ENCODE measurements at regions of chr13 and their contacts with region 1.

Region 1: DNA sequence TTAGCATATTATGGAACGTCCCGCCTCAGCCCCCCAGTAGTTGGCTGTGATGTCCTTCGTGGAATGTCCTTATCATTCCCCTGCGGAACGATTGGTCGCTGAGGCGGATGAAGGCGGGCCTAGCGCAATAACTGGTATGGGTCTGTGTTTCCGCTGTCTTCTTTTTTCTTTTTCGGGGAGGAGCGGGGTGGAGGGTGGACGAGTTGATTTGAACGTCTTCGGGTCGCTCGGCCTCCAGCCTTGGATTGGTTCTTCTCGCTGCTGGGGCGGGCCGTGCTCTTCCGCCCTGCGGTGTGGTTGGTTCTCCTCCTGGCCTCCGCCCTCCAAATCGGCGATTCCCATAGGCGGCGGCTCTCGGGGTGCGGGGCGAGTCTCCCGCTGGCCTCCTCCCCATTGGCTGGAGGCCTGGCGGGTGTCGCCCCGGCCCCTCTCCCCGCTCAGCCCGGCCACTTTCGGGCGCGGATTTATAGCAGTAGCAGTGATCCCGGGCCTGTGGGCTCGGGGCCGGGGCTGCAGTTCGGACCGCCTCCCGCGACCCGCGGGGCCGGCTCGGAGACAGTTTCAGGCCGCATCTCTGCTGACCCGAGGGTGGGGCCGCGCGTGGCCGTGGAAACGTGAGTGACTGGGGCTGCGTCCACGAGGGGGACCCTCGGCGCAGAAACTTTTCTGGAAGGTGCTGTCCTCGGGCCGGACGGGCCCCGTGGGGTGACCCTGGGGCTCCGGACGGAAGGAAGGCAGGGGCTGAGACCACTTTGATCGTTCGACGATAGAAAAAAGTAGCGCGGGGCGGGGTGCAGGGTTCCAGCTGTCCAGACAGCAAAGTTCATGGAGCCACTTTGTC is 2.1 kb downstream of the ING1 start:
- DNase-seq: peak; percentile 87 to 99 (median 99)
- ATAC-seq: peak; percentile 71
- H3K4me3 ChIP-seq: peak overlapping the region; percentile 68
- H3K4me3 Mint-ChIP-seq: peak overlapping the region; percentile 93 to 100 (median 98)
- H3K27ac ChIP-seq: peak overlapping the region; percentile 92
- H3K27ac Mint-ChIP-seq: peak overlapping the region; percentile 96 to 100 (median 98)
- H3K4me1 ChIP-seq: peaks cover 0 to 20% of the 10 kb centered on the region in 2 donors
- H3K4me1 Mint-ChIP-seq: peaks cover 21 to 56% (median 37%) of the 10 kb centered on the region in 7 donors
- H3K27me3 ChIP-seq: no peaks in the 10 kb centered on the region
- H3K27me3 Mint-ChIP-seq: peaks cover 0 to 4% (median 0%) of the 10 kb centered on the region in 5 donors

Region 2: DNA sequence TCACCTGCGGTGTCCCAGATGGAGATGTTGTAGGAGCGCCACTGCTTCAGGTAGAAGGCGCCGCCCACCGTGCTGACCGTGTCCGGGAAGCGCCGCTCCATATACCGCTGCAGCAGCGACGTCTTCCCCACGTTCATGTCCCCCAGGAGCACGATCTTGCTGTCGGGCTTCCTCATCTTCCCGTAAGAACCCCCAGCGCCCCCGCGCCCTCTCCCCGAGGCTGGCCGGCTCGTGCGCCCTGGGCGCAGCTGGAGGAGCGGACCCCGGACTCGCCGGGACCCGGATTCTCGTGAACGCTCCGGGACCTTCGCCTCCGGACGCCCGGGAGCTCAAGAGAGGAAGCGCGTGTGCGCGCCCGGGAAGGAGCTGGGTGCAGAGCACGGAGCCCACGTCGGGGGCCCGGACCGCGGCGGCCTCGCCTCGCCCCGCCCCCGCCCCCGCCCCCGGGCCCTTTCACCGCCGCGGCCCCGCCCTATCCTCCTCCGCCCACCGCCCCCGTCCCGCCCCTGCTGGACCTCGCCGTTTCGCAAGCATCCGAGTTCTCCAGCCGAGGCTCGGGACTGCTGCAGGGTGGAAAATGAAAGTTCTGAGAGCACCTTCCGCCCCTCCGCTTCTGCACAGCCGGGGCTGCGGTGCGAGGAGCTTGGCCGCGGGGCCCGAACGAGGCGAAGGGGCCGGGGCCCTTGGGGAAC is 154.1 kb before region 1 on chr13 and contains the start of gene RAB20:
- CTCF ChIA-PET with region 1: no interaction called
- POLR2A ChIA-PET with region 1: interaction called, 3 read pairs
- intact Hi-C with region 1: loop called (anchors 1 to 2 kb)
- DNase-seq: peak; percentile 5 to 66 (median 37)
- ATAC-seq: peak; percentile 82
- H3K4me3 ChIP-seq: peak within 1 kb of the TSS; percentile 79
- H3K4me3 Mint-ChIP-seq: peak within 1 kb of the TSS; percentile 85 to 99 (median 98)
- H3K27ac ChIP-seq: peak within 1 kb of the TSS; percentile 66
- H3K27ac Mint-ChIP-seq: peak within 1 kb of the TSS; percentile 73 to 96 (median 88)
- H3K4me1 ChIP-seq: peaks cover 4 to 9% of the 10 kb centered on the region in 2 donors
- H3K4me1 Mint-ChIP-seq: peaks cover 22 to 53% (median 41%) of the 10 kb centered on the region in 7 donors
- H3K27me3 ChIP-seq: no peaks in the 10 kb centered on the region
- H3K27me3 Mint-ChIP-seq: peaks cover 0 to 32% (median 4%) of the 10 kb centered on the region in 5 donors
- total RNA-seq, gene RAB20: 2.0 to 13.6 (median 4.0) TPM

Region 3: GRCh38 chr13:110615322-110616102 is 100.1 kb before region 1 on chr13 and contains the start of gene NAXD:
- CTCF ChIA-PET with region 1: no interaction called
- POLR2A ChIA-PET with region 1: interaction called, 24 read pairs
- intact Hi-C with region 1: loop called (anchors 1 kb)
- DNase-seq: peak; percentile 44 to 80 (median 76)
- ATAC-seq: peak; percentile 86
- H3K4me3 ChIP-seq: peak within 1 kb of the TSS; percentile 71
- H3K4me3 Mint-ChIP-seq: peak within 1 kb of the TSS; percentile 86 to 97 (median 95)
- H3K27ac ChIP-seq: peak within 1 kb of the TSS; percentile 75
- H3K27ac Mint-ChIP-seq: peak within 1 kb of the TSS; percentile 85 to 96 (median 93)
- H3K4me1 ChIP-seq: peaks cover 9 to 13% of the 10 kb centered on the region in 2 donors
- H3K4me1 Mint-ChIP-seq: peaks cover 19 to 47% (median 38%) of the 10 kb centered on the region in 7 donors
- H3K27me3 ChIP-seq: no peaks in the 10 kb centered on the region
- H3K27me3 Mint-ChIP-seq: peaks cover 0 to 5% (median 0%) of the 10 kb centered on the region in 5 donors
- total RNA-seq, gene NAXD: 17.2 to 34.1 (median 25.9) TPM

Region 4: DNA sequence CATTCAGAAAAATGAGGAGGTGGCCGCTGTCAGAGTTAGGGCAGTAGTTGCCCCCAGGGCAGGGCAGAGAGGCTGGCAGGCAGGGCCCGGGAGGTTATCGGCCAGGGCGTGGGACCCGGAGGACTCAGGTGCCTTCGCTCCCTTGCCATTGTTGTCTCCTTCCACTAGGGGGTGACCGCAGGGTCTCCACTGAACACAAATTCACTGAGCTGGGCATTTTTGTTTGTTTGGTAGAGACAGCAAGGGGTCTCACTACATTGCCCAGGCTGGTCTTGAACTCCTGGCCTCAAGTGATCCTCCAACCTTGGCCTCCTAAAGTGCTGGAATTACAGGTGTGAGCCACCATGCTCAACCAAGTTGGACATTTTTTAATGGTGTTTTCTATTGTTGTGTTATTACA is 34.8 kb before region 1 on chr13:
- CTCF ChIA-PET with region 1: interaction called, 7 read pairs
- POLR2A ChIA-PET with region 1: interaction called, 12 read pairs
- intact Hi-C with region 1: loop called (anchors 1 to 2 kb)
- DNase-seq: peak in 3 of 9 donors; percentile 8 to 22 (median 21)
- ATAC-seq: no peak
- H3K4me3 ChIP-seq: no peak overlapping the region
- H3K4me3 Mint-ChIP-seq: no peak overlapping the region
- H3K27ac ChIP-seq: no peak overlapping the region
- H3K27ac Mint-ChIP-seq: no peak overlapping the region
- H3K4me1 ChIP-seq: no peaks in the 10 kb centered on the region
- H3K4me1 Mint-ChIP-seq: peaks cover 4 to 22% (median 12%) of the 10 kb centered on the region in 7 donors
- H3K27me3 ChIP-seq: no peaks in the 10 kb centered on the region
- H3K27me3 Mint-ChIP-seq: no peaks in the 10 kb centered on the region

Region 5: DNA sequence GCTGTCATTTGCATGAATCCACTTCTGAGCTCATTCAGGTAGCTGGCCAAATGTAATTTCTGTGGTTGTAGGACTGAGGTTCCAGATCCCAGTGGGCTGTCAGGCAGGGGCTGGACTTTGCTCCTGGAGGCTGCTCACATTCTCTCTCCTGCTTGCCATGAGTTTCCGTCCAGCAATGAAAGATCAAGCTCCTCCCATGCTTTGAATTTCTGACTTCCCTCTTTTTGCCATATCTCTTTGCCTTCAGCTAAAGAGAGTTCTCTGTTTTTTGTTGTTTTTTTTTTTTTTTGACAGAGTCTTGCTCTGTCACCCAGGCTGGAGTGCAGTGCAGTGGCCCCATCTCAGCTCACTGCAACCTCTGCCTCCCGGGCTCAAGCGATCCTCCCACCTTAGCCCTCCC is 74.8 kb after region 1 on chr13:
- CTCF ChIA-PET with region 1: no interaction called
- POLR2A ChIA-PET with region 1: no interaction called
- intact Hi-C with region 1: no loop called
- DNase-seq: no peak
- ATAC-seq: no peak
- H3K4me3 ChIP-seq: no peak overlapping the region
- H3K4me3 Mint-ChIP-seq: no peak overlapping the region
- H3K27ac ChIP-seq: no peak overlapping the region
- H3K27ac Mint-ChIP-seq: no peak overlapping the region
- H3K4me1 ChIP-seq: no peaks in the 10 kb centered on the region
- H3K4me1 Mint-ChIP-seq: peaks cover 0 to 2% (median 0%) of the 10 kb centered on the region in 7 donors
- H3K27me3 ChIP-seq: no peaks in the 10 kb centered on the region
- H3K27me3 Mint-ChIP-seq: peaks cover 9 to 16% (median 13%) of the 10 kb centered on the region in 5 donors

Region 6: GRCh38 chr13:110819203-110820014 is 103.8 kb after region 1 on chr13:
- CTCF ChIA-PET with region 1: no interaction called
- POLR2A ChIA-PET with region 1: interaction called, 8 read pairs
- intact Hi-C with region 1: loop called (anchors 1 to 5 kb)
- DNase-seq: peak; percentile 39 to 78 (median 66)
- ATAC-seq: peak; percentile 95
- H3K4me3 ChIP-seq: no peak overlapping the region
- H3K4me3 Mint-ChIP-seq: peak overlapping the region in 3 of 10 donors; percentile 16 to 21 (median 19)
- H3K27ac ChIP-seq: no peak overlapping the region
- H3K27ac Mint-ChIP-seq: peak overlapping the region in 1 of 9 donors; percentile 72
- H3K4me1 ChIP-seq: no peaks in the 10 kb centered on the region
- H3K4me1 Mint-ChIP-seq: peaks cover 0 to 17% (median 14%) of the 10 kb centered on the region in 7 donors
- H3K27me3 ChIP-seq: no peaks in the 10 kb centered on the region
- H3K27me3 Mint-ChIP-seq: peaks cover 0 to 13% (median 0%) of the 10 kb centered on the region in 5 donors

Region 7: GRCh38 chr13:111153279-111153976 is 437.8 kb after region 1 on chr13:
- CTCF ChIA-PET with region 1: no interaction called
- POLR2A ChIA-PET with region 1: interaction called, 7 read pairs
- intact Hi-C with region 1: loop called (anchors 1 to 10 kb)
- DNase-seq: peak; percentile 87 to 96 (median 93)
- ATAC-seq: peak; percentile 93
- H3K4me3 ChIP-seq: peak overlapping the region; percentile 73
- H3K4me3 Mint-ChIP-seq: peak overlapping the region; percentile 85 to 96 (median 92)
- H3K27ac ChIP-seq: peak overlapping the region; percentile 79
- H3K27ac Mint-ChIP-seq: peak overlapping the region; percentile 88 to 96 (median 90)
- H3K4me1 ChIP-seq: peaks cover 14 to 16% of the 10 kb centered on the region in 2 donors
- H3K4me1 Mint-ChIP-seq: peaks cover 14 to 38% (median 29%) of the 10 kb centered on the region in 7 donors
- H3K27me3 ChIP-seq: no peaks in the 10 kb centered on the region
- H3K27me3 Mint-ChIP-seq: peaks cover 0 to 33% (median 0%) of the 10 kb centered on the region in 5 donors

Region 8: GRCh38 chr13:112587212-112587763 is 1871.7 kb after region 1 on chr13:
- CTCF ChIA-PET with region 1: no interaction called
- POLR2A ChIA-PET with region 1: no interaction called
- intact Hi-C with region 1: loop called (anchors 2 to 5 kb)
- DNase-seq: peak; percentile 32 to 82 (median 41)
- ATAC-seq: peak; percentile 69
- H3K4me3 ChIP-seq: peak overlapping the region; percentile 78
- H3K4me3 Mint-ChIP-seq: peak overlapping the region; percentile 86 to 98 (median 94)
- H3K27ac ChIP-seq: peak overlapping the region; percentile 81
- H3K27ac Mint-ChIP-seq: peak overlapping the region; percentile 69 to 94 (median 89)
- H3K4me1 ChIP-seq: peaks cover 18 to 20% of the 10 kb centered on the region in 2 donors
- H3K4me1 Mint-ChIP-seq: peaks cover 37 to 58% (median 43%) of the 10 kb centered on the region in 7 donors
- H3K27me3 ChIP-seq: no peaks in the 10 kb centered on the region
- H3K27me3 Mint-ChIP-seq: no peaks in the 10 kb centered on the region